ENCODE measurements at regions of chr4 and their contacts with region 1.

Region 1: DNA sequence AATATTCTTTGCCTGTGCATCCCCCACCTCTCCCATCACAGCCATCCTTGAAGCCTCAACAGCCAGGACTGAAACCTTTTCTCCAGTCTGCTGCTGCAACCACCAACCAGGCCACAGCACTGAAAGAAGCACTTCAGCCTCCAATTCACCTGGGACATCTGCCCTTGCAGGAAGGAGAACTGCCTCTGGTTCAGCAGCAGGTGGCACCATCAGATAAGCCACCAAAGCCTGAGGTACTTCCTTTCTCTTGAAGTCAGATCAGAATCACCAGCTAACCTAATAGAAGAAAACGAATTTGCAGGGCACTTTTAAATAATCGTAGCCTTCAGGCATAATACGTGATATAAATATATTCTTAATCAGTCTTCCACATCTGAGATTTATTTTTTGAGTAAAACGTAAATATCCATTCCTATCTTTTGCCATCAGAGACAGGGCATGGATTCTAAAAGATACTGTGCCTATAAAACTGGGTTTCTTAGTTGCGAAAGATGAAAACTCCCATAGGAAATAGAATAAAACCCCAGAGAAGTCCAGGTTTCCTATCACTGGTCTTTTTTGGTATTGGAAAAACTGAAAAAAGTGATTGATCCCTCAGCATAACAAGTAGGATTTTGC is 9.5 kb downstream of the AMBN start:
- DNase-seq: peak; percentile 89
- H3K4me3 Mint-ChIP-seq: no peak overlapping the region
- H3K27ac Mint-ChIP-seq: no peak overlapping the region
- H3K4me1 Mint-ChIP-seq: no peaks in the 10 kb centered on the region
- H3K27me3 Mint-ChIP-seq: peaks cover 14% of the 10 kb centered on the region

Region 2: DNA sequence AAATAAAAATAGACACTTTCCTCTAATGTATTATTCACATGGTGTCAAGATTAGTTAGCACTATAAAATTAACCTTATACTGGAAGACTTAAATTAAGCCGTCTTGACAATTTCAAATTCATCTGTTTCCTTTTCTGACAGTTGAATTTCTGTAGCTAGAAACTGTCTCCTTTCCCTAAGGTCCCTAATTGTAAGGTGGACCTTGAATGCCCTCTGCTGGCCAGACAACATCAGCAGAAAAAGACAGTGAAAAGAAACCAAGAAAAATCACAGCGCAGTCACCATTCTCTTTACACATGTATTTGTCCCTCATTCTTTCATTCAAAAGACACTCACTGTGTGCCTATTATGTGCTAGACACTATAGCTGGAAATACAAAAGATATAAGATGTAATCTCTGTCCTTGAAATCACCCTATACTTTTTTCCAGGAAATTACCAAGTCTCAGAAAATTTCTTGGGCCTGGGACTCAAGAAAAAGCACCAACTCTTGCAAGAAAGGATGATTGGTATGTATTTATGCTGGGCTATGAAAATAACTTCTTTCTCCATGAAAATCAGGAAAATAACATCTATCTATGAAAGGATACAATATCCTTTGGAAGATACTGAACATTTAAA is 42.2 kb before region 1 on chr4:
- intact Hi-C with region 1: no loop called
- DNase-seq: peak; percentile 75
- H3K4me3 Mint-ChIP-seq: no peak overlapping the region
- H3K27ac Mint-ChIP-seq: no peak overlapping the region
- H3K4me1 Mint-ChIP-seq: no peaks in the 10 kb centered on the region
- H3K27me3 Mint-ChIP-seq: peaks cover 1% of the 10 kb centered on the region

Region 3: GRCh38 chr4:71713611-71714203 is 1112.2 kb after region 1 on chr4:
- intact Hi-C with region 1: loop called (anchors 2 kb)
- DNase-seq: no peak
- H3K4me3 Mint-ChIP-seq: no peak overlapping the region
- H3K27ac Mint-ChIP-seq: no peak overlapping the region
- H3K4me1 Mint-ChIP-seq: no peaks in the 10 kb centered on the region
- H3K27me3 Mint-ChIP-seq: no peaks in the 10 kb centered on the region

Region 4: GRCh38 chr4:72302981-72303704 is 1701.6 kb after region 1 on chr4:
- intact Hi-C with region 1: loop called (anchors 5 kb)
- DNase-seq: peak; percentile 79
- H3K4me3 Mint-ChIP-seq: no peak overlapping the region
- H3K27ac Mint-ChIP-seq: no peak overlapping the region
- H3K4me1 Mint-ChIP-seq: no peaks in the 10 kb centered on the region
- H3K27me3 Mint-ChIP-seq: no peaks in the 10 kb centered on the region